ENCODE measurements at regions of chr16 and their contacts with region 1.

Region 1: DNA sequence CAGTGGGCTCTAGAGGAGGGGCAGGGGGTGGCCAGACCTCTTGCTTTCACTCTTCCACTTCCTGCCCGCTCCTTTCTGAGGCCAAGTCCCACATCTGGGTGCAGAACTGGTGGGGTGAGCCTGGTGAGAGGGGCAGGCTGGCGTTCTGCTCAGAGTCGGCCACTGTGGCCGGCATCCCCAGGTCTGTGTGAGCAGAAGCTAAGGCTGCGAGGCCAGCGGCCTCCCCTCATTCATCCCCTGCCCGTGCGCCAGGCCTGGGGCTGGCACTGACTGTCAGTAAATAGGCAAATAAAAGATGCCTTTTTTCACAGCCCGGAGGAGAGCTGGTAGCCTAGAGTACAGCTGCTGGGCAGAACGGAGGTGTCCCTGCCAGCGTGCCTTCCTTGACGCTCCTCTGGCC is 1.2 kb downstream of the DEF8 start:
- DNase-seq: peak in 1 of 10 donors; percentile 12
- H3K4me3 ChIP-seq: peak overlapping the region; percentile 39 to 80 (median 69)
- H3K27ac ChIP-seq: peak overlapping the region in 43 of 59 donors; percentile 0 to 83 (median 60)
- H3K27me3 ChIP-seq: no peaks in the 10 kb centered on the region
- CTCF ChIP-seq: no peak

Region 2: DNA sequence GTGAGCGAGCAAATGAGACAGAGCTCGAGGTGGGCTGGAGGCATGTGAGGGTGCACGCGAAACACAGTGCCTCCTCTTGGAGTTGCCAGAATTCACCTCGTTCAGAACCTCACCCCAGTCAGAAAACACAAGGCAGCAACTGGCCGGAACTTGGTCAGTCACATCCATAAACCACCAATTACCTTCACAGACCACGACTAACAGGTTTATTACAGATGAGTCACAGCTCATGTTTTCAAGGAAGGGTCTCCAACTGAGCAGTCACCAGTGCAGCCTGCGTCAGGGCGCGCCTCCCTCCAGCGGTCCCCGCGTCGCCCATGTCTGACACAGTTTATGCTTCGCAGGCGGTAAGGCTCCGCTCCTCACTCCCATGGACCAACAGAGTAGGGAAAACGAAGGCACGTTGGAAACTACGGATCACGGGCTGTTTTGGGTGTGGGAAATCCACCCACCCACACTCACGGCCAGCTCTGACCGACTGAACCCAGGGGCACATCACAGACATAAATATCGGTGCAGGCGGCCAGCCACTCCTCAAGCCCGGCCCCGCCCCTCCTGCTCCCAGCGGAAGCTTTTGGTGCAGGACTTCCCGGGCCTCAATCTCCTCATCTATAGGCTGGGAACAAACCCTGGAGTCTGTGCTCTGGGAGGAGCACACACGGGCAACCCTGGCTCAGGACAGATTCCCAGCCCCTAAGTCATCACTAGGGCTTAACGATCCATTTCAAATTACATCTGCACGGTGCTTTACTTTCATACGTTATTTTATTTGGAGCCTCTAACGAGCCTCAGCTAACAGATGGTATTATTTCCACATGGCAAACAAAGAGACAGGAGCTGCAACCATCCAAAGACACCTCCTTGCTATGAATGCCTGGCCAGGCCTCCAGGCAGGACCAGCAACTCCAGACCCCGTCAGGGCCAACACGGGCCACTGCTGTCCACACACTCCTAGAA is 606.0 kb before region 1 on chr16:
- intact Hi-C with region 1: no loop called
- DNase-seq: peak in 2 of 10 donors; percentile 25 to 27
- H3K4me3 ChIP-seq: peak overlapping the region in 4 of 59 donors; percentile 9 to 19 (median 14)
- H3K27ac ChIP-seq: peak overlapping the region in 33 of 59 donors; percentile 10 to 67 (median 40)
- H3K27me3 ChIP-seq: no peaks in the 10 kb centered on the region
- CTCF ChIP-seq: no peak

Region 3: DNA sequence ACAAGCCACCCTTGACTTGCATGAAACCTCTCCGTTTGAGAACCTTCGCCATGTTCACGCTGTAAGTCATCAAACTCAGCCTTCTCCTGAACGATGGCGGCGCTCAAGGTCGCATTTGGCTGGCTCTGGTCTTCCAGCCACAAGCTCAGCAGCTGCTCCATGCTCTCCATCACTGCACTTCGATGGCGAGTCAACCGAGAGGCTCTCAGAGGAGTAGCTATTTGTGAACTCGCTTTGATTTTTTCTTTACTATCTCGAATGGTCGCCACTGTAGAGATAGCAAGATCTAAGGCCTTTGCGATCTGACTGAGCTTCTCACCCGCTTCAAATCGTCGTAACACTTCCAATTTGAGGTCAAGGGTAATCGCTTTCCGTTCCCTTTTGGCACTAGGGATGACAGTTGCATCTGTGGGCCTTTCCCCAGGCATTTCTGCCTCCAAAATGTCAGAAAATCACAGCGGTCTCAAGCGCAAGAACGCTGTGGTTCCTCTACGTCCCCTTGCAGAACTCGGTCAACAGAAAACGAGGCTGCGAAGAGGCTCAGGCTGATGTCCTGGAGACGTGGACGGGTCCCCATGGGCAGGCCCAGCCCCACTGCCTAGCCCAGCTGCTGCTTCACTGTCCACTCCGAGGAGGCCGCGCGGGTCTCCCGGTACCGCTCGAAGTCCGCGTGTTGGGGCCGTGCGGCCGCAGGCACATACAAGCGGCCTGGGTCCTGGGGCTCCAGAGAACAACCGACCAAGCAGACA is 21.9 kb after region 1 on chr16:
- intact Hi-C with region 1: loop called in 1 of 2 experiments (anchors 2 kb)
- DNase-seq: peak in 2 of 10 donors; percentile 23 to 40
- H3K4me3 ChIP-seq: peak overlapping the region; percentile 65 to 100 (median 93)
- H3K27ac ChIP-seq: peak overlapping the region; percentile 73 to 99 (median 95)
- H3K27me3 ChIP-seq: no peaks in the 10 kb centered on the region
- CTCF ChIP-seq: no peak